Testis (tissue), 5 donors: ENCODE measurements at regions of chr1 and their contacts with region 1.

Region 1: DNA sequence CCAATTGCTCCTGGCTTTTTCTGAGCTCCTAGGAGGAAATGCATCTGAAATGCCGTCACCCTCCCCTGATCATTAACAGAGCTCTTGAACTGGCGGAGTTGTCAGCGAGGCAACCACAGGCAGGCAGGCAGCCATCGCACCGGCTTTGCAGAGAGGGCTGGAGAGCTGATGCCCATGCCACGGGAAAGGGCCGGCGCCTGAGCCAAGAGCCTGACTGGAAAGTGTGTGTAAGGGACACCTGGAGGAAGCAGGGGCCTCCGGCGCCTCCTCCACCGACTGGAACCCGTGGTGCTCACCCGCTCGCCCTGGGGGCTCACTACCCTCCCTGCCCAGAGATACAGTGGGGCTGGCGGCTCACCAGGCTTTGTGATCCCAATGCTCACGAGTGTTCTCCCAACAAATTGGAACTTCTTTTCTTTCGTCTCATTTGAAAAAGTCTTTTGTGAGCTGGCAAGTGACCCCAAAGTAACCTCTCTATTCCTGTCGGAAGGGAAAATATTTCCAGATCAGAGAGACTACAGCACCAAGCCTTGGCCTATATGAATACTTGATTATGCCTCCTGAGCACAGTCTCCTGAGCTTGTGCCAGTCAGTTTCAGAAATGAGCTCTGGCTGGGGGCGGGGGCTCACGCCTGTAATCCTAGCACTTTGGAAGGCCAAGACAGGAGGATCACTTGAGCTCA is 97.7 kb upstream of the SLC25A33 start:
- DNase-seq: peak; percentile 50
- H3K4me3 ChIP-seq: no peak overlapping the region
- H3K27ac ChIP-seq: peak overlapping the region; percentile 18 to 53
- H3K4me1 ChIP-seq: peaks cover 32% of the 10 kb centered on the region
- H3K27me3 ChIP-seq: no peaks in the 10 kb centered on the region
- CTCF ChIP-seq: no peak
- POLR2A ChIP-seq: no peak

Region 2: DNA sequence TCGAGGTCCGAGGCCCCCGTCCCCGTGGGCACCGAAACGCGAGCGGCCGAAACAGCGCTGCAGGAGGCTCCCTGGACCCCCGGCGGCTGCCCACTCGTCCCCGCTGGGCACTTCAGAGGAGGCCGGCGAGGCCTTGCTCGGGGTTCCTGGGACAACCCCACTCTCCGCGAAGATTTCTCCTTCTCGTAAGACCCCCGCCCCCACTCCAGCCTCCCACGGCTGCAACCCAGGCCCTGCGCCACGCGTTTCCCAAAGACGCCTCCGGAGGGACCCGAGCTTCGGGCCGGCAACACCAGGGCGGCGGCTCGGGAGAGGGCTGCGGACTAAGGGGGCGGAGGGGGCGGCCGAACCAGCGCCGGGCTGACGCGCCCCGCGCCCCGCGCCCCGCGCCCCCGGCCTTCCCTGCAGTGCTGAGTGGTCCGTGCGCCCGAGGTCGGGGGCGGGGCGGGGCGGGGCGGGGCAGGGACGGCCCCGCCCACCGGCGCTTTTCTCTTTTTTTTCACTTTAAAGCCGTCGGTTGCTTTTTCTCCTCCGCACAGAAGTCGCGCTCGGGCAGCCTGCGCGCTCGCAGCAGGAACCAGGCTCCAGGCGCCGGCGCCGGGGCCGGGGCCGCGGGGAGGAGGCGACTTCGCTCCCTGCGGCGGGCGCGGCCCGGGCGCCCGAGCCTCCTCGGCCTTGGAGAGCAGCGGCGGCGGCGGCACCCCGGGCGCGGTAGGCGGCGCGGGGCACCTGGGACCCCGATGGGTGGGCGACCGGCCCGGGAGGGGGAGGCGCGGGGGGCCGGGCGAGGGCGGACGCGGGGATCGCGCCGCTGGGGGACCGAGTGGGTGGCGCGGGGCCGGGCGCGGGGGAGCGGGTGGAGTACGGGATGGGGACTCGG is 149.0 kb before region 1 on chr1 and contains the start of gene SPSB1:
- intact Hi-C with region 1: loop called (anchors 10 kb)
- DNase-seq: peak; percentile 86
- H3K4me3 ChIP-seq: peak within 1 kb of the TSS; percentile 85 to 86
- H3K27ac ChIP-seq: peak within 1 kb of the TSS; percentile 74 to 93
- H3K4me1 ChIP-seq: peaks cover 40% of the 10 kb centered on the region
- H3K27me3 ChIP-seq: no peaks in the 10 kb centered on the region
- CTCF ChIP-seq: no peak
- POLR2A ChIP-seq: peak; percentile 60
- total RNA-seq, gene SPSB1: 30.0 to 37.9 TPM

Region 3: DNA sequence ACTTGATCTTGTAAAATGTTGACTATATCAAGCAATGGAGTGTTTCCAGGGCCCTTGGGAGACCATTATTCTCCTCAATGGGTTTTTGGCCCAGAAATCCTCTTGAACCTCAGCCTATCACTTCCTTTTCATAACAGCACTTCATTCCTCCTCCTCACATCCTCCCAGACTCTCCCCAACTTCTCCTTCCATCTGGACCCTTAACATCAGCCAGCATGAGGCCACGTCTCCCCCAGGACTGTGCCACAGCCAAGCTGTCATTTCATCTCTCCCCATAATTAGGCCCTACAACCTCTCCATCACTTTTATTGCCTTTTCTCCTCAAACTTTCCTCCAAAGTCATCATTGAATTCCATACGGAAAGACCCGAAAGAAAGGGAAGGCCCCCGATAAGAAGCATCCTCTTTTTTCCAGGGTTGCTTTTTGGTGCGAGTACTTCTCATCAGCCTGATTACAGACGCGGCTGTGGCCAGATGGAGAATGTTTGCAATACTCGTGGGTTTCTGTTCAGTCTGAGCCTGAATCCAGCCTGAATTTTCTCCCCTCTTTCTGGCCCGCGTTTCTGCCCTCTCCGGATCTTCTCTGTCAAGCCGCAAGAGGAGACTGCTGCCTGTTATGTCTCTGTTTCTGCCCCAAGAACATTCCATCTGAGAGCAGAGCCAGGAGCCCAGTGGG is 45.0 kb after region 1 on chr1:
- intact Hi-C with region 1: no loop called
- DNase-seq: no peak
- H3K4me3 ChIP-seq: no peak overlapping the region
- H3K27ac ChIP-seq: no peak overlapping the region
- H3K4me1 ChIP-seq: peaks cover 5% of the 10 kb centered on the region
- H3K27me3 ChIP-seq: no peaks in the 10 kb centered on the region
- CTCF ChIP-seq: no peak
- POLR2A ChIP-seq: no peak

Region 4: DNA sequence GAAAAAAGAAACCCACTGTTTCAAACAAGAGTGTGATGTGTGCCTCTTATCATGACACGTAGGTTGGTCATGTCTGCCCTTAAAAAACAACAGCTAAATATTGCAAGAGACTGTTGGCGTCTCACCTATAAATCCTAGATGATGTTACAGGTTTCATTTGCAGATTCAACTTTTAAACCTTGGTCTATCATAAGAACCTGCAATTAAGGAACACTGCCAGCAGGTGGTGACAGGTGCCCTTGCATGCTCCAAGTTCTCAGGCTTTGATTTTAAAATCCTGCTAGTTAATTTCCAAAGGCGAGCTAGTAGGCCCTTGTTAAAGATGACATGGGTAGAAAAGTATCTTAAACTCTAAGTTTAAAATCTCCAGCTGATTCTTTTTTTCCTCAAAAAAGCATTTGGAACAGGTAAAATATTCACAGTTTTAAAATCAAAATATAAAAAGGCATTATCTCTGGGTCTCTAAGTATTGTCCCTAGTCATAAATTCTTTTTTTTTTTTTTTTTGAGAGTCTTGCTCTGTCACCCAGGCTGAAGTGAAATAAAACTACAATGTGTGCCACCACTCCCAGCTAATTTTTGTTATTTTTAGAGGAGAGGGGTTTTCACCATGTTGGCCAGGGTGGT is 343.0 kb after region 1 on chr1:
- intact Hi-C with region 1: no loop called
- DNase-seq: peak; percentile 63
- H3K4me3 ChIP-seq: no peak overlapping the region
- H3K27ac ChIP-seq: no peak overlapping the region
- H3K4me1 ChIP-seq: no peaks in the 10 kb centered on the region
- H3K27me3 ChIP-seq: no peaks in the 10 kb centered on the region
- CTCF ChIP-seq: peak; percentile 40 to 55 (median 54)
- POLR2A ChIP-seq: no peak